Tibial artery (tissue), 4 donors: ENCODE measurements at regions of chr12 and their contacts with region 1.

Region 1: DNA sequence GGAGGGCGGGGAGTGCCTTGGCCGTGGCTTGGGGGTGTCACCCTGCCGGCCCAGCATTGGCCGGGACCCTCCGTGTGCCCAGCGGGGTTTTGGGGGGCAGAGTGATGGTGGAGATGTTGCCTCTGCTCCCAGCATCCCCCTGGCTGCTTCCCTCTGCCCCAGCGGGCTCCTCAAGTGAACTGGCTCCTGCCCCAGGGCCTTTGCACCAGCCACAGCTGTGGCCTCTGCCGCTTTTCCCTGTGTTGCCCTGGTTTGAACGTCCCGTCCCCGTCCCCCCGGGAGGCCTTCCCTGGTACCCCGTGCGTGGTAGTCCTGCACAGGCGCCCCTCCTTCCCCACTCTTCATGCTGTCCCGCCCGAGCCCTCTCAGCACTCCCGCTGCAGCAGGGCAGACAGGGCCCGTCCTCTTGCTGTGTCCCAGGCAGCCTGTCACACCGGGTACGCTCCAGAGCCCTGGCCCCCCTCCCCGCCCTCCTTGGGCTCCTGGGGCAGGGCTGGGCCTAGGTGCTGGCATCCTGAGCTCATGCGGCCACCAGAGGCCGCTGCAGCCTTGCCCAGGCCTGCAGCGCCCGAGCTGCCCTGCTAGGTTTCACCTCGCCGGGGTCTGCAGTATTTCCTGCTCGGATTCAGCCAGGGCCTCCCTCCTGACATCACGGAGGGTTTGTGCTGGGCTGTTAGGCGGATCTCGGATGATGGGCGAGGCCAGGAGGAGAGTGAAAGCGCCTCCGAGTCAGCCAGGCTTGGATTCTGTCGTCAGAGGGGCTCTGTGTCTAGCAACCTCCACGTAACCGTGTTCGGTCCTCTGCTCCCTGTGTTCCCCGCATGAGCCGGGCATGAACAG is 9.5 kb downstream of the NOC4L start:
- DNase-seq: peak; percentile 36 to 61
- H3K4me3 ChIP-seq: peak overlapping the region; percentile 8 to 34
- H3K27ac ChIP-seq: no peak overlapping the region
- H3K4me1 ChIP-seq: peaks cover 0 to 8% (median 5%) of the 10 kb centered on the region in 4 donors
- H3K27me3 ChIP-seq: no peaks in the 10 kb centered on the region
- CTCF ChIP-seq: peak; percentile 85 to 91

Region 2: GRCh38 chr12:131959641-131960589 is 193.8 kb before region 1 on chr12:
- intact Hi-C with region 1: no loop called
- DNase-seq: no peak
- H3K4me3 ChIP-seq: no peak overlapping the region
- H3K27ac ChIP-seq: no peak overlapping the region
- H3K4me1 ChIP-seq: peaks cover 0 to 40% (median 13%) of the 10 kb centered on the region in 4 donors
- H3K27me3 ChIP-seq: no peaks in the 10 kb centered on the region
- CTCF ChIP-seq: no peak

Region 3: DNA sequence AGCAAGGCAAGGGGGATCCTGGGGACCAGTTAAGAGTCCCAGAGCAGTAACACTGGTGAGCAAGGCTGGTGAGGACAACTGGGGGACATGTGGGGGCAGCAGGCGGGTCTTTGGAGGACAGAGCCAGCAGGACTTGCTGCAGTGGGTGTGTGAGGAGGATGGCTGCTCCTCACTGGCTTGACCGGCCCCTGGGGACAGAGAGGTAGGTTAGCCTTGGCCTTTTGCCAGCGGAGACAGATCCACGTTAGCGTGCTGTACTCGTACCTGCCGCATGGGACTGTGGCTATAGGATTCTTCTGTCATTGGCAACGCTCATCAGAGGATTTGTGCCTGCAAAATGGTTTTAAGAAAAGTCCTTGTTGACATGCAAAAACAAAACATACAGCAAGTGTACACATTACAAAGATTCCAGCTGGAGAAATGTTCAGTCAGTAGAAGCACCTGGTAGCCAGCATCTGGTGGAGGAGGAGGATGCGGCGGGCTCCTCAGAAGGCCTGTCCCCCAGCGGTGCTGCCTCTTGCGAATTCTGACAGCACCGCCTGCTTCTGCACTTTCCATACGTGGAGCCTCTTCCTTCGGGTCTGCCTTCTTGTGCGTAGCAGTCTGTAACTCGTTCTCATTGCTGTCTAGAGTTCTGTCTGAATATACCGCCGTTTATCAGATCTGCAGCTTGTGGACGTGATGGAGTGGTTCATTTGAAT is 112.7 kb before region 1 on chr12:
- intact Hi-C with region 1: no loop called
- DNase-seq: no peak
- H3K4me3 ChIP-seq: no peak overlapping the region
- H3K27ac ChIP-seq: no peak overlapping the region
- H3K4me1 ChIP-seq: no peaks in the 10 kb centered on the region
- H3K27me3 ChIP-seq: no peaks in the 10 kb centered on the region
- CTCF ChIP-seq: no peak

Region 4: DNA sequence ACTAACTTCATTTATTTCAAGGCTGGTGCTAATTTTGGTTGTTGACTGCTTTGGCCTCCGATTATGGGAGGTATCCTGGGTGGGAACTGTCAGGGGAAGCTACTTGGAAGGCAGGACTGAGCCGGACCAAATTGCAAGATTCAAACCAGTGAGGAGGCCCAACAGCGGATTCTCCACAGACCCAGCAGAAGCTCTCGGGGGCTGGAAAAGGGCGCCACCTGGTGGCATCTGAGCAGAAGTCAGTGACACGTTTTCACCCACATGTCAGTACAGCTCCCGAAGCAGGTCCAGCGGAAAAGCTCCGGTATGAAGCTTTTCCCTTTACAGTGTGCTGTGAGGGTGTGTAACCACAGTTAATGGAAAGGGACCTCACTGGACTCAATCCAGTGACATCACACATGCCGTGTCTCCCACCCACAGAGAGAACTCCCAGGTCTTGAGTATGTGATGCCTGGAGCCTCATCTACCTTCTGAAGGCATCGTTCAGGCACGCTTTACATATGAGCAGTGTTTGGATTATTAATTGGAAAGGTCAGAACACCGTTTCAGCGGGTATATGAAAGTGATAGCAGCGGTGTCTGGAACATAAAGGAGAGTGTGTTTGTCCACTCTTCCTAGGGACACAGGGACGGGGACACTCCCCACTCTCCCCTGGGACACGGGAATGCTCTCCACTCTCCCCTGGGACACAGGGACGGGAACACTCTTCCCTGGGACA is 461.3 kb after region 1 on chr12:
- intact Hi-C with region 1: loop called (anchors 1 kb)
- DNase-seq: peak; percentile 72 to 87
- H3K4me3 ChIP-seq: no peak overlapping the region
- H3K27ac ChIP-seq: no peak overlapping the region
- H3K4me1 ChIP-seq: peaks cover 0 to 23% (median 9%) of the 10 kb centered on the region in 4 donors
- H3K27me3 ChIP-seq: peaks cover 14 to 67% of the 10 kb centered on the region in 2 donors
- CTCF ChIP-seq: peak; percentile 83 to 90